H1 (cell line): ENCODE measurements at regions of chr2 and their contacts with region 1.

Region 1: GRCh38 chr2:44955593-44956392 is 14.3 kb downstream of the SIX3 start:
- DNase-seq: peak in 1 of 2 experiments; percentile 98
- H3K4me3 ChIP-seq: peak overlapping the region; percentile 2 to 53 (median 40); a peak in 7 of 8 replicates
- H3K27ac ChIP-seq: no peak overlapping the region
- H3K4me1 ChIP-seq: peaks cover 6 to 36% (median 18%) of the 10 kb centered on the region in 4 experiments
- H3K27me3 ChIP-seq: peaks cover 41 to 70% (median 61%) of the 10 kb centered on the region in 4 experiments
- CTCF ChIP-seq: peak in 2 of 3 experiments; percentile 93 to 96; a peak in 3 of 4 replicates
- EP300 ChIP-seq: no peak
- POLR2A ChIP-seq: no peak
- RAD21 ChIP-seq: peak; percentile 93 to 98

Region 2: GRCh38 chr2:44707945-44708660 is 247.7 kb before region 1 on chr2:
- CTCF ChIA-PET with region 1: interaction called, 12 read pairs
- POLR2A ChIA-PET with region 1: no interaction called
- DNase-seq: no peak
- H3K4me3 ChIP-seq: no peak overlapping the region
- H3K27ac ChIP-seq: no peak overlapping the region
- H3K4me1 ChIP-seq: peaks cover 1 to 30% (median 12%) of the 10 kb centered on the region in 4 experiments; a peak in 6 of 7 replicates
- H3K27me3 ChIP-seq: no peaks in the 10 kb centered on the region
- CTCF ChIP-seq: no peak
- EP300 ChIP-seq: no peak
- POLR2A ChIP-seq: no peak
- RAD21 ChIP-seq: no peak

Region 3: GRCh38 chr2:44770221-44771195 is 185.3 kb before region 1 on chr2:
- CTCF ChIA-PET with region 1: interaction called, 25 read pairs
- POLR2A ChIA-PET with region 1: no interaction called
- DNase-seq: peak in 1 of 2 experiments; percentile 38
- H3K4me3 ChIP-seq: no peak overlapping the region
- H3K27ac ChIP-seq: no peak overlapping the region
- H3K4me1 ChIP-seq: peaks cover 5 to 29% (median 21%) of the 10 kb centered on the region in 4 experiments; a peak in 6 of 7 replicates
- H3K27me3 ChIP-seq: peaks cover 0 to 17% (median 14%) of the 10 kb centered on the region in 4 experiments; a peak in 3 of 7 replicates
- CTCF ChIP-seq: peak; percentile 27 to 39 (median 31); a peak in 3 of 4 replicates
- EP300 ChIP-seq: no peak
- POLR2A ChIP-seq: no peak
- RAD21 ChIP-seq: peak; percentile 46 to 59; a peak in 3 of 4 replicates

Region 4: DNA sequence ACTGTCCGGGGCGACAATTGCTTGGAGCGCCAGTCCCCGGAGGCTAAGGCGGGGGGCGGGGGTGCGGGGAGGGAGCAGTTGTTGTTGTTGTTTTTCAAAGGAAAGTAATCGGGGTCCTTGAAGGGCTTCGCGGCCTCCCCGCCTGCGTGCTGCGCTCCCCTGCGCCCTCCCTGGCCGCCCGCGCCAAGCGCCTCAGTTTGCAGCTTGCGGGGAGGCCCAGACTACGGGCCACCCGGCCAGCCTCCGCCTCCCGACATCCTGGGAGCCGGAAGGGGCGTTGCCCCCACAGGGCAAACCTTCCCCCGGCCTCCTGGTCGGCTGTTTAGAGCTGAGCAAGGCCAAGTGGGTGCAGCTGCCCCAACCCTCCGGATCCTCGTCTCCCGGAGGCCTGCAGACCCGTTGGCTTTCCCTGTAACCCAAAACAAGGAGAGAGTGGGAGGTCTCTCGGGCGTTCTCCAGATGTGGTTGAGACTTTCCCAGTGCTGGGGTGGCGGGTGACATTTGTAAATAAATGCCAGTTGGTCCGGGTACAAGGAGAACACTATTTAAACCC is 18.0 kb before region 1 on chr2:
- CTCF ChIA-PET with region 1: interaction called, 22 read pairs
- POLR2A ChIA-PET with region 1: interaction called, 5 read pairs
- DNase-seq: peak in 1 of 2 experiments; percentile 82
- H3K4me3 ChIP-seq: peak overlapping the region; percentile 41 to 63 (median 51)
- H3K27ac ChIP-seq: no peak overlapping the region
- H3K4me1 ChIP-seq: peaks cover 0 to 74% (median 50%) of the 10 kb centered on the region in 4 experiments; a peak in 6 of 7 replicates
- H3K27me3 ChIP-seq: peaks cover 76 to 99% (median 96%) of the 10 kb centered on the region in 4 experiments; a peak in 6 of 7 replicates
- CTCF ChIP-seq: peak in 2 of 3 experiments; percentile 6 to 10; a peak in 1 of 4 replicates
- EP300 ChIP-seq: no peak
- POLR2A ChIP-seq: no peak
- RAD21 ChIP-seq: peak in 1 of 2 experiments; percentile 32; a peak in 2 of 4 replicates

Region 5: DNA sequence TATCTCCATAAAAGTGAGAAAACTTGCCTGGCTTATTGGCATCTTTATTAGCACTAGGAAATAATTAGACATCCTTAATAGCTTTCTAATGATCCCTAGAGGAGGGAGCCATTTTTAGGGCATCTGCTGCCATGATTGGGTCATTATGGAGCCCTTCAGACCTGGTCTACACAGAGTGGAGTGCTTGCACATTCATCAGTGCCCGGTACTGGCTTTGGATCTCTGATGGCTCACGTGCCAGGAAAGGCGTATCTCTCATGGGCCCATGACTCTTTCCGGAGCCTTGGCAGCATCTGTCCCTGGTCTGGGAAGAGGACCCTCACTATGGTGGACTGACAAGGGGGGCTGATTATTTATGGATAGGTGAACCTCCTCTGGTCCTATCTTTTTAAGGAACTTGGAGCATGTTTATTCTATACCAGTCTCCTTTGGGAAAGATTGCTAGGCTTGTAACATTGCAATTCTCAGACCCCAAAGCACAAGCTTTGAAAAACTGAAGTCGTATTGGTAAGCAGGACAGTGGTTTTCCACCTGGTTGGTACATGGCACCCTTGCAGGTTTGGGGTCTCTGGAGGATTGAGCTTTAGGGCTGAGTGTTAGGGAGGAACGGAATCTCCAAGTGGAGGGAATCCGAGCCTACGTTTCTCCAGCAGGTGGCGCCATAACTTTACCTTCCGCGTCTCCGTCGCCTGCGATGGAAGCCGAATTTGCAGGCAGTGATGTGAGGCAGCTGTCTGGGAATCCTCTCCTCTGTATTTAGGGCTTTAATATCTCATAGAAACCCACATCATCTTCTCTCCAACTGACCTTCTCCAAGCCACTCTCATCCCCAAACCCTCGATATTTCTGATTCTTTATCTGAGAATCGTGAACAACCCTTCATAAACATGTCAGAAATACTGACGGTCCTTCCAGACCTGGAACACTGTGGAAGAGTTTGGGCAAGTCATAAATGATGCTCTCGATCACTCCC is 25.6 kb after region 1 on chr2:
- CTCF ChIA-PET with region 1: interaction called, 24 read pairs
- POLR2A ChIA-PET with region 1: no interaction called
- DNase-seq: peak in 1 of 2 experiments; percentile 93
- H3K4me3 ChIP-seq: no peak overlapping the region
- H3K27ac ChIP-seq: no peak overlapping the region
- H3K4me1 ChIP-seq: peaks cover 0 to 4% (median 0%) of the 10 kb centered on the region in 4 experiments; a peak in 2 of 7 replicates
- H3K27me3 ChIP-seq: no peaks in the 10 kb centered on the region
- CTCF ChIP-seq: peak; percentile 88 to 95 (median 94)
- EP300 ChIP-seq: no peak
- POLR2A ChIP-seq: no peak
- RAD21 ChIP-seq: peak; percentile 98